Left ventricle myocardium superior (tissue), 1 donor: ENCODE measurements at regions of chr15 and their contacts with region 1.

Region 1: DNA sequence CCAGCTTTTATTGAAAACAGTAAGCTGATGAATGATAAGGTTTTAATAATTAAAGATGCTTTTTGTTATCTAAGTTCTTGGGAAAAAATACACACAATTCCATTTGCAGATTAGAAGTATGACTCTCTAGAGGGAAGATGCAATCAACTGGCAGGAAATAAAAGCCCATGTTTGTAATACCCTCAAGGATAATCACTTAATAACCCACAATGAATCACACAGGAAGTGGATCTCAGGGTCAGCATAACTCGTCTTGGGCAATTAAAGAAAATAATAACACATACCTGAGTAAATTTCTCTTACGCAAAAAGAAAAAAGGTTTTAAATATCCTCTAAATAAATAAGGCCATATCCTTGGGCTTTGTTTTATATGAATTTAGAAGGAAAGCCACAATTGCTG is 9.4 kb upstream of the EID1 start:
- DNase-seq: no peak
- ATAC-seq: no peak

Region 2: GRCh38 chr15:48785195-48785594 is 83.3 kb before region 1 on chr15:
- intact Hi-C with region 1: no loop called
- DNase-seq: peak; percentile 55
- ATAC-seq: peak; percentile 60

Region 3: DNA sequence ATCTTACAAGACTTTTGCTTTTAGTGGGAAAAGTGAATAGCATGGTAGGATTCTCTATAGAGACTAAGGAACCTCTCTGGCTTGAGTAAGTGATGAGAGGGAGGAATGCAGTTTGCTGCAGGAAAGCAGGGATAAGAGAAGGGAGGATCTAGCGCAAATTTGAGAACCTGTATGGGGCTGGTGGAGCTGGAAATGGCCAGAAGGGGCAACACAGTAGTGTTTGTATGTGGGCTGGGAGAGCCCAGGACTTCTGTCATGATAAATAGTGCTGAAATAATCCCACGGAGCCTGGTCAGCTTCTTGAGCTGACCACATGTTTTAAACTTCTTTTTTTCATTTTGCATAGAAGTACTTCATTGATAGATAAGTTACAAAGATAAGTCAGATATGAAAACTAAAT is 106.3 kb after region 1 on chr15:
- intact Hi-C with region 1: loop called (anchors 5 kb)
- DNase-seq: no peak
- ATAC-seq: no peak